ENCODE measurements at regions of chr1 and their contacts with region 1.

Region 1: DNA sequence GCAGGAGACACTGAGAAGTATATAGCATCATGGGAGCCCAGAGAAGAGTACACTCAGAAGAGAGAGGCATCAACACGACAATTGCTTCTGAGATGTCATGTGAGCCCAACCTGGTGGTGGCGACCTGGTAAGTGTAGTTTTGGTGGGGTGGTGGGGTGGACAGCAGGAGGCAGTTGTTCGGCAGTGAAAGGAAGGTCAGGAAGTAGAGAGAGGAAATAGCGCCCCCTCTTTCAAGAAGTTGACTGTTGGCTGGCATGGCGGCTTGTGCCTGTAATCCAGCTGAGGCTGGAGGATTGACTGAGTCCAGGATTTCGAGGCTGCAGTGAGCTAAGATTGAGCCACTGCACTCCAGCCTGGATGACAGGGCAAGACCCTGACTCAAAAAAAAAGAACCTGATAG is 12.6 kb downstream of the RSPO1 start:
- DNase-seq: no peak
- H3K4me3 ChIP-seq: no peak overlapping the region
- H3K27ac ChIP-seq: no peak overlapping the region
- H3K4me1 ChIP-seq: no peaks in the 10 kb centered on the region
- H3K27me3 ChIP-seq: peaks cover 0 to 20% (median 9%) of the 10 kb centered on the region in 4 experiments; a peak in 3 of 7 replicates
- CTCF ChIP-seq: peak; percentile 43 to 76 (median 69)
- EP300 ChIP-seq: no peak
- POLR2A ChIP-seq: no peak
- RAD21 ChIP-seq: peak; percentile 35 to 47

Region 2: DNA sequence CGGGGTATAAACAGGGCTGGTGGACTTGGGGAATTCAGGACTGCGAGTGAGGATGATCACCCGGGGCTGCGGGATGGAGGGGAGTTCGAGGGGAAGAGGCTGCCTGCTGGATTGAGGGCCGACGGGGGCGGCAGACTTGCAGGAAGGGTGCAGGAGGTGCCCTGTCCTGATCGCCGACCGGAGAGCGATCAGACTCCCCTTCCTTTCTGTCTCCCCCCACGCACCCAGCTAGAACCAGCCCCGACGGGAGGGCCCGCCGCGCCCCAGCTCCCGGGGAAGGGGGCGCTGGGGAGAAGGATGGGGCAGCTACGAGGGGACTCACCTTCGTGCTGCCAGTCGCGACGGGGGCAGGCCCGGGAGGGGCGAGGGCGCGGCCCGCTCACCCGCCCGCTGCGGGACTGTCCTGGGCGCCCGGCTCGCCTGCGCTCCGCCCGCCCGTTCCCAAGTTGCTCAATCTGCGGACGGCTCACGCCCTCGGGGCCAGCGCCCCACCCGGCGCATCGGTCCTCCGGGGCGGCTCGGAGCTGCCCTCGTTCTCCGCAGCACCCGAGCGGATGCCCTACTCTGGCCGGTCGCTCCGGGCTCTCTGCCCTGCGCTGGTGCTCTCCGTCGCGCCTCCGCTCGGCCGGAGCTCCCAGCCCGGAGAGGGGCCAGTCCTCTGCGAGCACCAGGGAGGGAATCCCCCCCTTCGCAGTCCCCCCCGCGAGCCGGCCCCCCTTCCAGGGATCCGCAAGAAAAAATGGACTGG is 12.3 kb after region 1 on chr1 and contains the start of gene RSPO1:
- CTCF ChIA-PET with region 1: interaction called, 20 read pairs
- POLR2A ChIA-PET with region 1: interaction called, 3 read pairs
- DNase-seq: peak in 1 of 2 experiments; percentile 59
- H3K4me3 ChIP-seq: peak within 1 kb of the TSS; percentile 32 to 56 (median 35)
- H3K27ac ChIP-seq: no peak within 1 kb of the TSS
- H3K4me1 ChIP-seq: peaks cover 0 to 15% (median 7%) of the 10 kb centered on the region in 4 experiments; a peak in 6 of 7 replicates
- H3K27me3 ChIP-seq: peaks cover 64 to 100% (median 94%) of the 10 kb centered on the region in 4 experiments
- CTCF ChIP-seq: no peak
- EP300 ChIP-seq: no peak
- POLR2A ChIP-seq: no peak
- RAD21 ChIP-seq: no peak
- total RNA-seq, gene RSPO1: 0.21 TPM in 1 of 2 replicates, not detected in the other

Region 3: GRCh38 chr1:37676281-37677243 is 54.4 kb after region 1 on chr1:
- CTCF ChIA-PET with region 1: interaction called, 45 read pairs
- POLR2A ChIA-PET with region 1: no interaction called
- DNase-seq: no peak
- H3K4me3 ChIP-seq: no peak overlapping the region
- H3K27ac ChIP-seq: no peak overlapping the region
- H3K4me1 ChIP-seq: peaks cover 0 to 5% (median 2%) of the 10 kb centered on the region in 4 experiments; a peak in 4 of 7 replicates
- H3K27me3 ChIP-seq: no peaks in the 10 kb centered on the region
- CTCF ChIP-seq: no peak
- EP300 ChIP-seq: no peak
- POLR2A ChIP-seq: no peak
- RAD21 ChIP-seq: no peak

Region 4: GRCh38 chr1:37682334-37682987 is 60.3 kb after region 1 on chr1:
- CTCF ChIA-PET with region 1: interaction called, 45 read pairs
- POLR2A ChIA-PET with region 1: no interaction called
- DNase-seq: peak in 1 of 2 experiments; percentile 90
- H3K4me3 ChIP-seq: no peak overlapping the region
- H3K27ac ChIP-seq: no peak overlapping the region
- H3K4me1 ChIP-seq: no peaks in the 10 kb centered on the region
- H3K27me3 ChIP-seq: no peaks in the 10 kb centered on the region
- CTCF ChIP-seq: peak in 2 of 3 experiments; percentile 79 to 81; a peak in 3 of 4 replicates
- EP300 ChIP-seq: no peak
- POLR2A ChIP-seq: no peak
- RAD21 ChIP-seq: peak; percentile 95 to 96

Measured in H1 (cell line).